Activated naive CD4-positive, alpha-beta T cell treated with anti-CD3 and anti-CD28 coated beads for 36 hours (primary cell): ENCODE measurements at regions of chr11 and their contacts with region 1.

Region 1: GRCh38 chr11:118051611-118052461 is 25.0 kb upstream of the TMPRSS4 start:
- DNase-seq: peak; percentile 84
- H3K4me3 Mint-ChIP-seq: no peak overlapping the region
- H3K27ac Mint-ChIP-seq: peak overlapping the region; percentile 61
- H3K4me1 Mint-ChIP-seq: peaks cover 52% of the 10 kb centered on the region
- H3K27me3 Mint-ChIP-seq: no peaks in the 10 kb centered on the region

Region 2: GRCh38 chr11:117807482-117808327 is 244.1 kb before region 1 on chr11:
- CTCF ChIA-PET with region 1: interaction called, 91 read pairs
- intact Hi-C with region 1: loop called (anchors 1 kb)
- DNase-seq: peak; percentile 87
- H3K4me3 Mint-ChIP-seq: no peak overlapping the region
- H3K27ac Mint-ChIP-seq: no peak overlapping the region
- H3K4me1 Mint-ChIP-seq: peaks cover 13% of the 10 kb centered on the region
- H3K27me3 Mint-ChIP-seq: no peaks in the 10 kb centered on the region

Region 3: DNA sequence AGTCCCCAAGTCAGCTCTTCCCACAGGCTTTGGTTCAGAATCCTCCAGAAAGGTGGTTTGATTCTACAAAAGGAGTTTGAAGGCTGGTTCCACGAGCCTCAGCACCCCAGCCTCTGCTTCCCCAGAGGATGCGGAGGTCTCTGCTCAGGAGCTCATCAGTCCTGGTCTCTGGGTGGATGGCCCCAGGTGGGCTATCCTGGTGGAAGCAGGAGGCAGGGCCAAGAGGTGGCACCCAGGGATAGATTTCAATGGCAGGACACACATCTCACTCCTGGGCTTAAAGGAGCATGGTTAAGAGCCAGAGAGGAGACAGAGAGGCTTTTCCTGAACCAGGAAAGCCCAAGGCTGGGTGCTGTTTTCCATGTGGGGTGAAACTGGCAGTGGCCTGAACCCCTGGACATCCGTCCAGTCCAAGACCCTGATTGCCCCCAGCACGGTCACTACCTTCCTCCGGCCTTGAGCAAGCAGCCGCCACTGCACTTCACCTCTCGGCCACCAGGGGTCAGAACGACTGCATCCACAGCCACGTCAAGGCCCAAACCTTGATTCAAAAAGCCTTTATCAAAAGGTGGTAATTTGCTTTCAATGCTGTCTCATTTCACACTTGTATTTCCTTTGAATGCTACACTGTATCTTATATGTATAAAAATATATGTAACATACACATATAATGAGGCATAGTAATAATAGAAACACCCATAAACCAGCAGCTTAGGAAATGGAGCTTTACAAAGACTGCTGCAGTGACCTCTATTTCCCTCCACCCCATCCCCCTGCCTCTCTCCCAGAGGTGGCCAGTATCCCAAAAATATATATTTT is 208.0 kb before region 1 on chr11:
- CTCF ChIA-PET with region 1: interaction called, 108 read pairs
- intact Hi-C with region 1: loop called (anchors 1 kb)
- DNase-seq: peak; percentile 90
- H3K4me3 Mint-ChIP-seq: no peak overlapping the region
- H3K27ac Mint-ChIP-seq: no peak overlapping the region
- H3K4me1 Mint-ChIP-seq: no peaks in the 10 kb centered on the region
- H3K27me3 Mint-ChIP-seq: no peaks in the 10 kb centered on the region

Region 4: GRCh38 chr11:117932067-117932370 is 119.8 kb before region 1 on chr11:
- CTCF ChIA-PET with region 1: interaction called, 10 read pairs
- intact Hi-C with region 1: no loop called
- DNase-seq: peak; percentile 86
- H3K4me3 Mint-ChIP-seq: no peak overlapping the region
- H3K27ac Mint-ChIP-seq: peak overlapping the region; percentile 20
- H3K4me1 Mint-ChIP-seq: peaks cover 49% of the 10 kb centered on the region
- H3K27me3 Mint-ChIP-seq: no peaks in the 10 kb centered on the region

Region 5: GRCh38 chr11:117985953-117986887 is 65.6 kb before region 1 on chr11 and contains the start of gene IL10RA:
- CTCF ChIA-PET with region 1: interaction called, 11 read pairs
- intact Hi-C with region 1: loop called (anchors 1 kb)
- DNase-seq: peak; percentile 81
- H3K4me3 Mint-ChIP-seq: peak within 1 kb of the TSS; percentile 84
- H3K27ac Mint-ChIP-seq: peak within 1 kb of the TSS; percentile 88
- H3K4me1 Mint-ChIP-seq: peaks cover 63% of the 10 kb centered on the region
- H3K27me3 Mint-ChIP-seq: no peaks in the 10 kb centered on the region
- total RNA-seq, gene IL10RA: 11.3 to 16.1 TPM